ENCODE measurements at regions of chr11 and their contacts with region 1.

Region 1: GRCh38 chr11:100930185-100930778 is 199.3 kb downstream of the PGR start:
- DNase-seq: no peak
- ATAC-seq: peak; percentile 77
- H3K4me3 ChIP-seq: no peak overlapping the region
- H3K27ac ChIP-seq: no peak overlapping the region
- H3K4me1 ChIP-seq: no peaks in the 10 kb centered on the region
- H3K27me3 ChIP-seq: no peaks in the 10 kb centered on the region

Region 2: GRCh38 chr11:100575870-100576705 is 354.2 kb before region 1 on chr11:
- intact Hi-C with region 1: loop called (anchors 2 to 5 kb)
- DNase-seq: no peak
- ATAC-seq: peak; percentile 87
- H3K4me3 ChIP-seq: no peak overlapping the region
- H3K27ac ChIP-seq: no peak overlapping the region
- H3K4me1 ChIP-seq: no peaks in the 10 kb centered on the region
- H3K27me3 ChIP-seq: no peaks in the 10 kb centered on the region

Region 3: DNA sequence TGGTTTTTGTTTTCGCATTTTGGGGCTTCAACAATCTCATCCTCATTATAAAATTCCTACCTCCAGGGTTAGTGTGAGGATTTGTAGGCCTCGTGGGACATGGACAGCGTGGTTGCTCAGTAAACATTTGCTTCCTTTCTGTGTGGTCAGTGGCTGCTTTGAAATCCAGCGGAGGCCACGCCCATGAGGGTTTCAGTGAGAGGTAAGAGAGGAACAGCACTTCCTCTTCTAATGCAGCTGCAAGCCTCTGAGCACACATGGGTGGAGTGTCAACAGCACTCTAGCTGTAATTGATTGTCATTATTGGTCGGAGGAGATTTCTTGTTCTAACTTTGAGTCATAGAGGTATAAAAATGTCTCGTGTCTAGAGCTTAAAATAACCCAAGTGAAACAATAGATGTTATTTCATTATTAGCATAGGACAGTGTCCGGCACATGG is 249.2 kb before region 1 on chr11:
- intact Hi-C with region 1: loop called (anchors 2 to 5 kb)
- DNase-seq: peak in 1 of 2 donors; percentile 77
- ATAC-seq: no peak
- H3K4me3 ChIP-seq: no peak overlapping the region
- H3K27ac ChIP-seq: no peak overlapping the region
- H3K4me1 ChIP-seq: no peaks in the 10 kb centered on the region
- H3K27me3 ChIP-seq: no peaks in the 10 kb centered on the region

Region 4: GRCh38 chr11:100948936-100949335 is 18.7 kb after region 1 on chr11:
- intact Hi-C with region 1: no loop called
- DNase-seq: no peak
- ATAC-seq: no peak
- H3K4me3 ChIP-seq: no peak overlapping the region
- H3K27ac ChIP-seq: no peak overlapping the region
- H3K4me1 ChIP-seq: no peaks in the 10 kb centered on the region
- H3K27me3 ChIP-seq: no peaks in the 10 kb centered on the region

Measured in aorta (tissue), 5 donors.